ENCODE measurements at regions of chr1 and their contacts with region 1.

Region 1: DNA sequence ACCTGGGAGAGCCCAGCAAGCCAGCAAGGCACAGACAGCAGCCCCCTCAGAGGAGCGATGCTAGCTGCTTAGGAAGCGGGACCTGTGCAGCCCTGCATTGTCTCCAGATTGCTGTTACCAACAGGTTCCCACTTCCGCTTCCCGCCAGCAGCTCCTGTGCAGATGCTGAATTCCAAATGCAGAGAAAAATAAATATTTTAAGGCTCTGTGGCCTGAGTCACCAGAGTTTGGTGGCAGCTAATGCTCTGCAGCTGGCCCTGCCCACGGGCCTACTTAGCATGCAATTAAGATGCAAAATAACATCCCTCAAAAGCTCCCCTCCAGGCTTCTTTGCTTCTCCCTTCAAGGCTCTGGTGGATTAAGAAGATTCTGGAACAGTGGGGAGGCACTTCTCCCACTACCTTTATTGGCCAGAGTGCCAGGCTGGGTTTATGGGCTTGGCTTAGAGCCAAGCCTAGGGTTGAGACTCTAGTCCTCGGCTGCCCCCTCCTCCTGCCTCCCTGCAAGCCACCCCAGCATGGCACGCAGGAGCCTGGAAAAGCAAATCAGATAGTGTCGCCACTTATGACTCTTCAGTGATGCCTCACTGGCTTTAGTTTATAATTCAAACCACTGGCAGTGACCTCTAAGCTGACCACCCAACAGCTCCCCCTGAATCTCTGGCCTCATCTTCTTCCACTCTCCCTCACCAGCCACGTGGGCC is 207.1 kb upstream of the ZC3H12A start:
- DNase-seq: no peak
- ATAC-seq: peak; percentile 66
- H3K4me3 Mint-ChIP-seq: no peak overlapping the region
- H3K27ac Mint-ChIP-seq: no peak overlapping the region
- H3K4me1 Mint-ChIP-seq: peaks cover 39% of the 10 kb centered on the region
- H3K27me3 Mint-ChIP-seq: no peaks in the 10 kb centered on the region
- CTCF ChIP-seq: no peak

Region 2: GRCh38 chr1:37292789-37293188 is 25.5 kb after region 1 on chr1:
- CTCF ChIA-PET with region 1: interaction called, 14 read pairs
- POLR2A ChIA-PET with region 1: no interaction called
- DNase-seq: peak; percentile 21
- ATAC-seq: peak; percentile 55
- H3K4me3 Mint-ChIP-seq: no peak overlapping the region
- H3K27ac Mint-ChIP-seq: no peak overlapping the region
- H3K4me1 Mint-ChIP-seq: peaks cover 22% of the 10 kb centered on the region
- H3K27me3 Mint-ChIP-seq: peaks cover 7% of the 10 kb centered on the region
- CTCF ChIP-seq: no peak